ENCODE measurements at regions of chr7 and their contacts with region 1.

Region 1: DNA sequence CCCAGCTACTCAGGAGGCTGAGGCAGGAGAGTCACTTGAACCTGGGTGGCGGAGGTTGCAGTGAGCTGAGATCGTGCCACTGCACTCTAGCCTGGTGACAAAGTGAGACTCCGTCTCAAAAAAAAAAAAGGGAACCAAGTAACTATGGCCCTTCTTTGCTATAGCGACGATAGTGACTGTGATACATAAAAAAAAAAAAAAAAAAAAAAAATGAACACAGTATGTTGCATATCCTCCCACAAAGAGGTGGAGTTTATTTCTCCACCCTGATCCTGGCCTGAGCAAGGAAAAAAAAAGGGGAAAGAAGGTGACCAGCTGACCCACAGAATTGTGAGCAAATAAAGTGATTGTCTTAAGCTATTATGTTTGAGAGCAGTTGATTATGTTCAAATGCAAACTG is 42.3 kb upstream of the STEAP1B start:
- DNase-seq: no peak
- H3K4me3 ChIP-seq: no peak overlapping the region
- H3K4me3 Mint-ChIP-seq: no peak overlapping the region
- H3K27ac Mint-ChIP-seq: no peak overlapping the region
- H3K4me1 ChIP-seq: peaks cover 30% of the 10 kb centered on the region
- H3K4me1 Mint-ChIP-seq: no peaks in the 10 kb centered on the region
- H3K27me3 ChIP-seq: no peaks in the 10 kb centered on the region
- H3K27me3 Mint-ChIP-seq: no peaks in the 10 kb centered on the region
- CTCF ChIP-seq: no peak

Region 2: DNA sequence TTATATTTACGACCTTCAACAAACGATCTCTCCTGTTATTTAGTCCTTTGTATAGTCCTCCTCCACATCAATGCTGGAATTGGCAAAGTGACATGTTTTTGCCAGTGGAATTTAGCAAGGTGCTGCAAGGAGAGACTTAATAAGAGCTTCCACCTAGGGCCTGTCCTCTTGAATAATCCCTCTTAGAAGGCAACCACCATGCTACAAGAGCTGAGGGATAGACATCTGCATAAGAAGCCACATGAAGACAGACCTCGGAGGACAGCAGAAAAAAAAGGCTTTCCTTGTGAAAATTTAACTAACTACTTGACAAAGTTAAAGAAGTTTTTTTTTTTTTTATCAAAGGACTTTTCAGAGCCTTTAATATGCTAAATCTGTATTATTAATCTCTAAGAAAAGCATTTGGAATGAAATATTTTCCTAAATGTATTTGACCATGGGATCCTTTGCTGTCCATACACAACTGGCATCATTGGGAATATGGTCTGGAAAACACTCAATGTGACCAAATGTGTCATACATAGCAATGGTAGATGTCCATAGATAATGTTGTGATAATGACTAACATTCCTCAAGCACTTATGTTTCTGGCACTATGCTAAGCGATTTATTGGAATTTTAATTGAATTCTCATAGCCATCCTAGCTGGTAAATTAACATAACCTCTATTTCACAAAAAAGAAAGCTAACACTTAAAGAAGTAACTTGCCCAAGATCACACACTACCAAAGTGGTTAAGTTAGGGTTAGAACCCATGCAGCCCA is 458.5 kb after region 1 on chr7:
- CTCF ChIA-PET with region 1: interaction called, 10 read pairs
- POLR2A ChIA-PET with region 1: no interaction called
- intact Hi-C with region 1: no loop called
- DNase-seq: no peak
- H3K4me3 ChIP-seq: no peak overlapping the region
- H3K4me3 Mint-ChIP-seq: no peak overlapping the region
- H3K27ac Mint-ChIP-seq: no peak overlapping the region
- H3K4me1 ChIP-seq: no peaks in the 10 kb centered on the region
- H3K4me1 Mint-ChIP-seq: no peaks in the 10 kb centered on the region
- H3K27me3 ChIP-seq: no peaks in the 10 kb centered on the region
- H3K27me3 Mint-ChIP-seq: no peaks in the 10 kb centered on the region
- CTCF ChIP-seq: no peak

Measured in Caco-2 (cell line).